ENCODE measurements at regions of chr19 and their contacts with region 1.

Region 1: GRCh38 chr19:29873024-29873800 is 61.4 kb downstream of the CCNE1 start:
- DNase-seq: no peak
- H3K4me3 ChIP-seq: peak overlapping the region; percentile 29 to 66 (median 40)
- H3K27ac ChIP-seq: no peak overlapping the region
- H3K4me1 ChIP-seq: peaks cover 11 to 21% (median 12%) of the 10 kb centered on the region in 3 donors
- H3K27me3 ChIP-seq: peaks cover 0 to 67% (median 2%) of the 10 kb centered on the region in 4 donors
- CTCF ChIP-seq: peak; percentile 66 to 90 (median 80)
- POLR2A ChIP-seq: no peak

Region 2: DNA sequence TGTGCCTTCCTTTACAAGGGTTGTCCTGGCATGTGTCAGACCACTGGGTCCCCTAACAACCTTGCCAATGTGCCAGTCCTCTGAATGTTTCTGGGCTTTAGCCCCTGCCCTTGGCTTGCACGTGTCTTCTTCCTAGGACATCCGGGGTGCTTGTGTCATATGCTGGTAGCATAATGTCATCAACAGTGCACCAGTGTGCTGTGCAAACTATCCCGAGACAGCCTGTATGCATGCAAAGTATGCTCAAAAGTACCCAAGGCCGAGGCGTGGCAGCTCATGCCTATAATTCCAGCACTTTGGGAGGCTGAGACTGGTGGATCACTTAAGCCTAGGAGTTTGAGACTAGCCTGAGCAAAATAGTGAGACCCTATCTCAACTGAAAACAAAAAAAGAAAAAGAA is 137.4 kb before region 1 on chr19:
- intact Hi-C with region 1: loop called (anchors 10 kb)
- DNase-seq: no peak
- H3K4me3 ChIP-seq: no peak overlapping the region
- H3K27ac ChIP-seq: no peak overlapping the region
- H3K4me1 ChIP-seq: no peaks in the 10 kb centered on the region
- H3K27me3 ChIP-seq: peaks cover 0 to 44% (median 0%) of the 10 kb centered on the region in 4 donors
- CTCF ChIP-seq: no peak
- POLR2A ChIP-seq: no peak

Measured in esophagus squamous epithelium (tissue), 5 donors.